K562 (cell line): ENCODE measurements at regions of chr17 and their contacts with region 1.

Region 1: DNA sequence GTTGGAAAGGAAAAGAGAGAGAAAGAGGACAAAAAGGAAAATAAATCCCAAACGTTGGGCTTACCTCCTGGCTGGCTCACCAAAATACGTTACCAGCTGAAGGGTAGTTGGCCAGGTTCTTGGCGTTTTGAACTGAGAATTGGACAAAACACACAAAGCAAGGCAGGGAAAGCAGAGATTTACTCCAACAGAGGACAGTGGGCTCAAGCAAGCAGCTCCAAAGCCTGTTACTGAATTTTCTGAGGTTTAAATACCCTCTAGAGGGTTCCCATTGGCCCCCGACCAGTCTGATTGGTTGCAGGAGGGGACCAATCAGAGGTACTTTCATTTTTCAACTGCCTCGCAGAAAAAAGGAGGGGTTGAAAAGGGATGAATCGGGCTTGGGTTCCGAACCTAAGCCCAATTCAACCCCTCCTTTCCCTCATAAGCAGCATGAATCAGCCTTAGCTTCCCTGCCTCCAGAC is 55.6 kb upstream of the ALOX12 start:
- DNase-seq: peak; percentile 47 to 82 (median 60)
- ATAC-seq: peak; percentile 92
- H3K4me3 ChIP-seq: peak overlapping the region; percentile 60
- H3K27ac ChIP-seq: peak overlapping the region; percentile 77
- H3K4me1 ChIP-seq: peaks cover 14 to 17% of the 10 kb centered on the region in 2 experiments
- H3K27me3 ChIP-seq: no peaks in the 10 kb centered on the region
- CTCF ChIP-seq: no peak
- EP300 ChIP-seq: no peak
- POLR2A ChIP-seq: peak; percentile 92
- RAD21 ChIP-seq: no peak

Region 2: DNA sequence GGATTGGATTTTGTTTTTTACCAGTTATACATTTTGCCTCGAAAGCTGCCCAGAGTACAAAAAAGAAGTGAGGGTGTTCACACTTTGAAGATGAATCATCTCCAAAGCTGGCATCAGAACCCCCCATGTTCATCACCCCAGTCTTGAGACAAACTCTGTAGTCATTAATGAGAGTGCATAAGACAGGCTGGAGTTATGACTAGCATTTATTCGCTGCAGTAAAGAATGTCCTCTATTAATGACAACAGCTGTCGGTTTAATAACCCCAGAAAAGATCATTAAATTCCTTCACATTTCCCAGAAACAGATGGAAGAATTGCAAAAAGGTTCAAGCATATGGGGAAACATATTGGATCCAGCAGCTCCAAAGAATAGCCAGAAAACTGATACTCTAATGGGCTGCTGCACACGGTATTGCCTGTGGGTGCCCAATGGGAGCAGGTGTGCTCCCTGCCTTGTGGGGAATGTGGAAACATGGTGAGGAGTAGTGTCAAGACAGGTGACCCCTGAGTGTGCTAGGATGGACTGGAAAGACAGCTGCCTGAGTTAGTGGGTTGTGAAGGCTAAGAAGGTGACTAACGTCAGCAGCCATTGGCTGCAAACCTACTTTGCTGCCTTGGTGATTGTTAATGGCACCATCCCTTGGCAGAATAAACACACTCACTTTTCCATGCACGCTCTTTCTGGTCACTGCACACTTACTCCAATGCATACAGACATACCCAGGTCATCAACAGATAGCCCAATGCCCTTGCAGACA is 587.2 kb before region 1 on chr17:
- CTCF ChIA-PET with region 1: no interaction called
- POLR2A ChIA-PET with region 1: no interaction called
- in situ Hi-C with region 1: no loop called
- intact Hi-C with region 1: no loop called
- DNase-seq: no peak
- ATAC-seq: no peak
- H3K4me3 ChIP-seq: no peak overlapping the region
- H3K27ac ChIP-seq: no peak overlapping the region
- H3K4me1 ChIP-seq: no peaks in the 10 kb centered on the region
- H3K27me3 ChIP-seq: no peaks in the 10 kb centered on the region; a peak in 1 of 5 replicates
- CTCF ChIP-seq: no peak
- EP300 ChIP-seq: no peak
- POLR2A ChIP-seq: no peak
- RAD21 ChIP-seq: no peak

Region 3: DNA sequence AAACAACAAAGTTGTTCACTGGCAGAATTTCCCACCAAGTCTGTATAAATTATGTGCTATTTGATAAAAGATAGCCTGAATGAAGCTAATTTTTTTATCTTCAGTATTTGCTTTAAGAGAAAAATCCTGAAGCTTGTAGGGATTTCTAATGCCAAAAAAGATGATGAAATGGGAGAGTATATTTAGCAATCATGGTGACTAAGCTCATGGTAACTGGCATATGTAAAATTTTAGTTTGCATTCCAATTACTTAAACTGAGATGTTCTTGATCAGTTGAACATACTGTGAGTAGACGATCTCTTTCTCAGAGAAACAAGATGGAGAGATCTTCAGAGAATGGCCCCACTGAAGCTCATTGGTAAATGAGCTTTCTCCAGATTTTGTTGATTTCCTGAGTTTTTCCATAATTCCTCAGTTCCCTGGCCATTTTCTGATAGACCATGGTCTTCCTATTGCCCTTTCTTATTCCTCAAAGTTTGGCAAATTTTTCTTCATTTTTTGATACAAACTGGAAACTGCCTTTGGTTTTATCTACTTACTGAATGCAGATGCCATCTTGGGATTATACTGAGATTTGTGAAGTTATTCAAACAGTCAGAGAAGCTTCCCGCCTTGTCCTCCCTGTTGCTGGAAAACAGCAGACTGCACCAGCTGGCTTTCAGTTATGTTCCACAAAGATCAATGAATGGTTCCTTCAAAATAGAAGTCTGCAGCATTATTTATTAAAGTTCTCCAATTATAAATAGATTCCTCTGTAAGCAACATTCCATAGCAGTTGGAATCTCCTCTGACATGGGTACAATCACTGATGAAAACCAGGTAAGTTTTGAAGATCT is 12.7 kb before region 1 on chr17:
- CTCF ChIA-PET with region 1: no interaction called
- POLR2A ChIA-PET with region 1: interaction called, 52 read pairs
- in situ Hi-C with region 1: no loop called
- intact Hi-C with region 1: no loop called
- DNase-seq: no peak
- ATAC-seq: no peak
- H3K4me3 ChIP-seq: no peak overlapping the region
- H3K27ac ChIP-seq: no peak overlapping the region
- H3K4me1 ChIP-seq: peaks cover 0 to 19% of the 10 kb centered on the region in 2 experiments; a peak in 3 of 5 replicates
- H3K27me3 ChIP-seq: no peaks in the 10 kb centered on the region
- CTCF ChIP-seq: no peak
- EP300 ChIP-seq: no peak; the same call in 1 of the 2 replicates
- POLR2A ChIP-seq: no peak
- RAD21 ChIP-seq: no peak